A673 (cell line): ENCODE measurements at regions of chr16 and their contacts with region 1.

Region 1: GRCh38 chr16:24869033-24869432 is 23.3 kb downstream of the SLC5A11 start:
- DNase-seq: no peak
- H3K4me3 ChIP-seq: no peak overlapping the region
- H3K27ac ChIP-seq: no peak overlapping the region
- H3K4me1 ChIP-seq: no peaks in the 10 kb centered on the region
- H3K27me3 ChIP-seq: no peaks in the 10 kb centered on the region
- CTCF ChIP-seq: no peak

Region 2: GRCh38 chr16:24986512-24987303 is 117.7 kb after region 1 on chr16:
- CTCF ChIA-PET with region 1: no interaction called
- POLR2A ChIA-PET with region 1: interaction called, 19 read pairs
- intact Hi-C with region 1: no loop called
- DNase-seq: peak; percentile 45
- H3K4me3 ChIP-seq: peak overlapping the region; percentile 23
- H3K27ac ChIP-seq: peak overlapping the region; percentile 83
- H3K4me1 ChIP-seq: peaks cover 80% of the 10 kb centered on the region
- H3K27me3 ChIP-seq: no peaks in the 10 kb centered on the region
- CTCF ChIP-seq: no peak